ENCODE measurements at regions of chr10 and their contacts with region 1.

Region 1: DNA sequence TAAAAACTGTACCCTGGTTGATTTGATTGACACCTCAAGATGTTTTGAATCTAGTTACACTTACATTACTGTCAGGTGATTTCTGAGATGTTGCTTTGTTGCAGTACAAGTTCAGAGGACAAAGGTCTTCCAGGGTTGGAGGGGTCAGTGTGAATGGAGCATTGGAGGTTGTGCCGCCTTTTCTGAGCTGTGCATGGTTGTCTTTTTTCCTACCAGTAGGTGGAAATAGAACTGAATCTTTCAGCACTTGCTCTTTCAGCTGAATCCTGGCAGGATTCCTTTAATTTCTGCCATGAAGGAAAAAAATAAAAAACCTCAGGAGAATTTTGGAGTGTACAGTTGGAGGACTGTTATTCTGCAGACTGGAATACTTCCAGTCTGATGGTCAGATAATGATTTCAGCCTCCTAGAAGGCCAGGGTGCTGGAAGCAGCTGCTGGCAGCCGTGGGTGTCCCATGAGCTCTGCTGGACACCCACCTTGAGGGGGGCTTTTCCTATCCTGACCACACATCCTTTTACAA is 82.7 kb downstream of the PLCE1 start:
- DNase-seq: peak; percentile 71
- ATAC-seq: peak; percentile 85
- H3K4me3 ChIP-seq: no peak overlapping the region
- H3K27ac ChIP-seq: no peak overlapping the region
- H3K4me1 ChIP-seq: peaks cover 1% of the 10 kb centered on the region; the same call in 1 of the 2 replicates
- H3K27me3 ChIP-seq: no peaks in the 10 kb centered on the region
- CTCF ChIP-seq: peak; percentile 73
- POLR2A ChIP-seq: no peak
- RAD21 ChIP-seq: peak; percentile 84

Region 2: GRCh38 chr10:94225589-94225988 is 149.2 kb after region 1 on chr10:
- CTCF ChIA-PET with region 1: no interaction called
- POLR2A ChIA-PET with region 1: no interaction called
- dilution Hi-C with region 1: no loop called
- in situ Hi-C with region 1: no loop called
- intact Hi-C with region 1: loop called (anchors 5 kb)
- DNase-seq: no peak
- ATAC-seq: no peak
- H3K4me3 ChIP-seq: no peak overlapping the region
- H3K27ac ChIP-seq: no peak overlapping the region
- H3K4me1 ChIP-seq: peaks cover 2% of the 10 kb centered on the region
- H3K27me3 ChIP-seq: no peaks in the 10 kb centered on the region
- CTCF ChIP-seq: peak; percentile 31; the same call in 1 of the 2 replicates
- POLR2A ChIP-seq: no peak
- RAD21 ChIP-seq: peak; percentile 42; the same call in 1 of the 2 replicates

Region 3: DNA sequence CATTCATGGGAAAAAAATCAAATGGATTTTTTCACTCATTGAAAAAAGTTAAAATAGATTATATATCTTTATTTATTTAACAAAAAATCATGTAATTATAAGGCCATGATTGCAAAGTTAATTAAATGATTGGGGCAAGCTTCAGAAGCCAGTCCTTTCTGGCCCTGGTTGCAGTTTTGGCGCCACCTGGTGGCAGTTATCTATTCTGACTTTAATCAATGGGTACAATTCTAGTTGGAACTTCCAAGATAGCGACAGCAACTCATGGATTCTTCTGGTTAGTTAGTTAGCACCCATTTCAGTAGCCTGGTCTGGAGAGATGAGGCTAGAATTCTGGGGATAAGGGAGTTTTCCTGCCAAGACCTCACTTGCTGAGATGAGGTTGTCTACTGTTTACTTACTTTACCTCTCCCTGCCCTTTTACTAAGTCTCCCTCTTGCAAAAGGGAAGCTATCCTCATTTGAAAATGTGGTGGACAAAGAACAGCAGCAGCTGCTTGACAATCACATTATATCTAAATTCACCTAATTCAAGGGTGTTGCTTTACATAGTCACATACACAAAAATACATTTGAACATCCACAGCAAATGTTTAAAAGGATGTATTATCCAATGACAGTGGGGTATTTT is 244.0 kb after region 1 on chr10:
- CTCF ChIA-PET with region 1: interaction called, 26 read pairs
- POLR2A ChIA-PET with region 1: no interaction called
- dilution Hi-C with region 1: no loop called
- in situ Hi-C with region 1: loop called (anchors 5 kb)
- intact Hi-C with region 1: loop called (anchors 1 kb)
- DNase-seq: peak; percentile 52
- ATAC-seq: peak; percentile 64
- H3K4me3 ChIP-seq: no peak overlapping the region
- H3K27ac ChIP-seq: no peak overlapping the region
- H3K4me1 ChIP-seq: peaks cover 2% of the 10 kb centered on the region; the same call in 1 of the 2 replicates
- H3K27me3 ChIP-seq: no peaks in the 10 kb centered on the region
- CTCF ChIP-seq: peak; percentile 87
- POLR2A ChIP-seq: 0 out of 2 replicates have a peak, but pooled peaks have one; percentile 30
- RAD21 ChIP-seq: peak; percentile 91